Colonic mucosa (tissue), 4 donors: ENCODE measurements at regions of chr6 and their contacts with region 1.

Region 1: GRCh38 chr6:11496152-11497060 is 41.1 kb upstream of the TMEM170B start:
- DNase-seq: peak; percentile 84
- H3K4me3 ChIP-seq: no peak overlapping the region
- H3K27ac ChIP-seq: no peak overlapping the region
- H3K4me1 ChIP-seq: no peaks in the 10 kb centered on the region
- H3K27me3 ChIP-seq: no peaks in the 10 kb centered on the region
- CTCF ChIP-seq: peak; percentile 81

Region 2: GRCh38 chr6:10954590-10955010 is 541.8 kb before region 1 on chr6:
- intact Hi-C with region 1: loop called (anchors 5 kb)
- DNase-seq: peak; percentile 74
- H3K4me3 ChIP-seq: no peak overlapping the region
- H3K27ac ChIP-seq: no peak overlapping the region
- H3K4me1 ChIP-seq: no peaks in the 10 kb centered on the region
- H3K27me3 ChIP-seq: no peaks in the 10 kb centered on the region
- CTCF ChIP-seq: peak; percentile 69

Region 3: DNA sequence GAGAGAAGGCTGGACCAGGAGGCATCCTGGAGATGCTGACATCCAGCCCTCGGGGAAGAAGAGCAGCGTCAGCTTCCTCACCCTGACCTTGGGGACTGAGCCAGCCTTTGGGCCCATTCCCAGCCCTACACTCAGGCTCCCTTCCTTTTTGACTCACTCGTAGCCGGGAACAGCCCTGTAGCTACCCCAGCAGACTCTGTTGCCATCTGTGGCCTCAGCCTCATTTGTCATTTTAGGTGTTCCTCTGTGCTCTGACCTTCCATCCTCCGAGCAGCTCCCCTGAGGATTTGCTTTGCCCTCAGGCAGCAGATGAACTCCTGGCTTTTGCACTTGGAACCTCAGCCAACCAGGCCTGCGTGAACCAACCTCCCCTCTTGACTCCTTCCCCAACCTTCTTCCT is 519.8 kb before region 1 on chr6:
- intact Hi-C with region 1: no loop called
- DNase-seq: no peak
- H3K4me3 ChIP-seq: no peak overlapping the region
- H3K27ac ChIP-seq: no peak overlapping the region
- H3K4me1 ChIP-seq: no peaks in the 10 kb centered on the region
- H3K27me3 ChIP-seq: no peaks in the 10 kb centered on the region
- CTCF ChIP-seq: no peak

Region 4: DNA sequence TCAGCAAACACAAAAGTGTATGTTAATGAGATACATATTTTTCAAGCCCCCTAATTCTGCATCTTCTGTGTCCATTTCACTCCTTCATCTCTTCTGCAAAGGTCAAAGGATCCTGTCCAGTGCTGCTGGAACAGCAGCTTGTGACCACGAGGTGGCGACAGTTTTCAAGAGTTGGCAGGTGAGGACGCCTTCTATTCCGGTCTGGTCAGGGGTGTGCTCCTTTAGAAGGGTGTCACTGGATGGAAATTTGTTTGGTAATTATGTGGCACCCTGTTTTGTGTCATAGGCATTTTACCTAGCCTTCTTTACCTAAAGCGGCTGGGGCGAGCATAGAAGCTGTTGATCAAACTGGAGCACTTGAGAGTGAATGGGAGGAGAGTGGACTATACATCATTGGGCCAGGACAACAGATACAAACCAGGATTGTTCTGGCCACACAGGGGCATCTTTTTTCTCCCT is 352.0 kb before region 1 on chr6:
- intact Hi-C with region 1: loop called (anchors 2 kb)
- DNase-seq: peak; percentile 85
- H3K4me3 ChIP-seq: no peak overlapping the region
- H3K27ac ChIP-seq: no peak overlapping the region
- H3K4me1 ChIP-seq: no peaks in the 10 kb centered on the region
- H3K27me3 ChIP-seq: no peaks in the 10 kb centered on the region
- CTCF ChIP-seq: peak; percentile 88

Region 5: GRCh38 chr6:11172501-11173332 is 323.7 kb before region 1 on chr6:
- intact Hi-C with region 1: loop called (anchors 10 kb)
- DNase-seq: peak; percentile 84
- H3K4me3 ChIP-seq: no peak overlapping the region
- H3K27ac ChIP-seq: no peak overlapping the region
- H3K4me1 ChIP-seq: no peaks in the 10 kb centered on the region
- H3K27me3 ChIP-seq: no peaks in the 10 kb centered on the region
- CTCF ChIP-seq: peak; percentile 90